ENCODE measurements at regions of chr3 and their contacts with region 1.

Region 1: GRCh38 chr3:46062679-46063078 is 35.4 kb upstream of the XCR1 start:
- DNase-seq: no peak
- H3K4me3 ChIP-seq: no peak overlapping the region
- H3K27ac ChIP-seq: no peak overlapping the region
- H3K4me1 ChIP-seq: no peaks in the 10 kb centered on the region
- H3K27me3 ChIP-seq: peaks cover 0 to 4% of the 10 kb centered on the region in 2 experiments
- CTCF ChIP-seq: no peak
- POLR2A ChIP-seq: no peak

Region 2: DNA sequence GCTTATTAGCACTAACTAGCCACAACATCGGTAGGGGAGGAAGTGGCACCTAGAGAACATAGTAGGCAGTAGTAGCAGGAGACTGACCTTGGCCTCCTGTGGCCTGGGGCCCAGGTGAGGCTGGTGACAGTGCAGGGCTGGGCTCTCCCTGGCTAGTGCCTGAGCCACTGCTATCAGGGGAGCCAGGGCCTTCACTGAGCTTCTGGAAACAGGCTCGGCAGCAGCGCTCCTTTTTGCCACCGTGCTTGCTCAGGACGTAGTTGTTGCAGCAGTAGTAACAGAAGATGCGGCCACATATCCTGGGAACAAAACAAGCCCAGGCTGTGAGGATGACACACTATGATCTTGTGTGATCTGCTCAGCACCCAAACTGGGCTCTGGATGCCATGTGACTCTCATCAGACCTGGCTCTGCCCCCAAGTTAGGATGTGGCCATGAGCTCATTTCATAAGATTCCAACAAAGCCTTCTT is 104.3 kb before region 1 on chr3:
- CTCF ChIA-PET with region 1: no interaction called
- POLR2A ChIA-PET with region 1: no interaction called
- dilution Hi-C with region 1: no loop called
- intact Hi-C with region 1: no loop called
- DNase-seq: no peak
- H3K4me3 ChIP-seq: no peak overlapping the region
- H3K27ac ChIP-seq: no peak overlapping the region
- H3K4me1 ChIP-seq: no peaks in the 10 kb centered on the region
- H3K27me3 ChIP-seq: no peaks in the 10 kb centered on the region
- CTCF ChIP-seq: no peak
- POLR2A ChIP-seq: no peak

Region 3: DNA sequence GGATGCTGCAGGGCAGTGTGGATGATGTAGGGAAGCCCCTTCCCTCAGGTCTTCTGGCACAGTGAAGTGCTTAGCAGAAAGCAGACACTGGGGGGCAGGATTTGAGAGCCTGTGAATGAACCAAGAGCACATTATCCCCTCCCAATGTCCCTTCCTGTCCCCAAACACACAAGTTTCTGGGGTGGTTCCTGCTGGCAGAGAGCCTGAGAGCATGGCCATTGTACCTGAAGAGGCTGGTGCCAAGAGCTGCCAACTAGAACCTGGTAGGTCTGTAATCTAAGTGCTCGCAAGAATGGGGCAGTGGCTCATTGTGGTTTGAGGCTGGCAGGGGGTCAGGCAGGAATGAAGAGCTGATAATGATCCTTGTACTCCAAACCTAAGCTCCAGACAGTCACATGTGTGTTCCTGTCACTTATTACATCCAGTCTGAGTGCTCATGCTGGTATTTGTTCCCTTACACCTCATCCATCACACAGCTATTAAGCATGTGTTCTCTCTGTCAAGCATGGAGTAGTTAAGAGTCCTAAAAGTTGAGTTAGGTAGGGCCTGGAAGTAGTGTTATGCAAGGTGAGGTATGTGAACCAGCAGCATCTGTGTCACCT is 152.2 kb after region 1 on chr3:
- CTCF ChIA-PET with region 1: no interaction called
- POLR2A ChIA-PET with region 1: no interaction called
- dilution Hi-C with region 1: no loop called
- intact Hi-C with region 1: no loop called
- DNase-seq: no peak
- H3K4me3 ChIP-seq: no peak overlapping the region
- H3K27ac ChIP-seq: no peak overlapping the region
- H3K4me1 ChIP-seq: no peaks in the 10 kb centered on the region
- H3K27me3 ChIP-seq: no peaks in the 10 kb centered on the region
- CTCF ChIP-seq: peak in 1 of 2 donors; percentile 15
- POLR2A ChIP-seq: no peak

Region 4: GRCh38 chr3:46585799-46586693 is 523.4 kb after region 1 on chr3:
- CTCF ChIA-PET with region 1: no interaction called
- POLR2A ChIA-PET with region 1: no interaction called
- dilution Hi-C with region 1: no loop called
- intact Hi-C with region 1: loop called (anchors 5 kb)
- DNase-seq: no peak
- H3K4me3 ChIP-seq: no peak overlapping the region
- H3K27ac ChIP-seq: no peak overlapping the region
- H3K4me1 ChIP-seq: no peaks in the 10 kb centered on the region
- H3K27me3 ChIP-seq: no peaks in the 10 kb centered on the region
- CTCF ChIP-seq: no peak
- POLR2A ChIP-seq: no peak